GM18951 (cell line): ENCODE measurements at regions of chr13 and their contacts with region 1.

Region 1: DNA sequence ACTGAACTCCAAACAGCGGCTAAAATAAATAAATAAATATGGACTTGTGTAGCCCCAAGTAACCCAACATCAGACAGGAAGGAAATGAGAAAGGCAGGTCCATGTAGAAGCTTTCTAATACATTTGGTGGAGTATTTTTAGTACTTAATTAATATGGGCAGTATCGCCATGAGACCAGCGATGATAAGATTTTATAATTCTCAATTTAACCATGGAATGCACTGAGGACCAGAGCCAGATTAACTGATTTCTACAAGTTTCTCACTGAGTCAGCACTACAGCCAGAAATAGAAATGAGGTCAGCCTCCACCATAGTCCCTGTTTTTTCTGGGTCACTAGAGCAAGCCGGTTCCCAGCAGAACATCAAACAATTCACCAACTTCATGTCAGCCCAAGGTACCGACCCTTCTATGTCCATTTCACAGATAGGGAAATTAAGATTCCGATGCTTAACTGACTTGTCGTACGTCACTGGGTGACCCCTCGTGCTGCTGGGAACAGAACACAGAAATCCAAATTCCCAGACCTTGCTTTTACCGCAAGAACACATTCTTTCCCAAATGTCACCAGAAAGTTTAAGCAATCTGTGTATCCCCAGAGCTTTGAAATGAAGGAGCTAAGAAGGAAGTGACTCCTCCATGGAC is 90.4 kb downstream of the COL4A1 start:
- POLR2A ChIP-seq: no peak

Region 2: GRCh38 chr13:110412132-110412914 is 195.8 kb after region 1 on chr13:
- in situ Hi-C with region 1: loop called (anchors 10 kb)
- POLR2A ChIP-seq: no peak